ENCODE measurements at regions of chr3 and their contacts with region 1.

Region 1: DNA sequence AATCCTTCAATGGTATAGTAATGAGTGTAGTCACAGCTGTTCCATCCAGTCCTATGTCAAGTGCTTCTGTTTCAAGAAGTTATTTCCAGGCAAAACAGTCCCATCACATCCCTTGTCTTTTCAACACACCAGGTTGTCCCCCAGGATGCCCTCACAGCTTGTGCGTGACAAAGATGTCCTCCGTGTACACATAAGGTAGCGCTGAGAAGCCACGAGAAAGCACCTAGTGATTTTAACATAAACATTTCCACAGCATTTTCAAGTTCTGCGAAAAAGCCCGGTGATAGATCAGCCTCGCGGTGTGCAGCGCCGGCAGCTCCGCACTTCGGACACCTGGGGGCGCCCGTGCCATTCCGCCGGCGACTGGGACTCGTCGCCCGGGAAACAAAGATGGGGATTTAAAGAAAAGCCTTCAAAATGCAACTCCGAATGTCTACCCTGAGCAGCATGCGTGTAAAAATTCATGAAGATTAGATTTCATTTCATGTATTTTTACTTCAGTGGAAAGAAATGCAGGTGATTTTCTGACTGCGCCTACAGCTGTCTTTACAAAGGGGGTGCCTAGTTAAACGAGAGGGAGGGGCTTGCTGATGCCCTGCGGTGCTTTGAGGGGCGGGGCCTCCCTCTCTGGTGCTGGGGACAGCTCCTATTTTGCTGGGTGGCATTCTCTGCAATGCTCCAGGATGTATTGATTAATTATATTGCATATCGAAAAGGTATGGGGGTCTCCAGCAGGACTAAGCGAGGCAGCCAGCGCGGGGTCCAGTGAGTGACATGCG is 49.9 kb downstream of the KY start:
- DNase-seq: peak; percentile 28
- ATAC-seq: peak; percentile 94
- H3K4me3 ChIP-seq: no peak overlapping the region
- H3K27ac ChIP-seq: no peak overlapping the region
- H3K4me1 ChIP-seq: peaks cover 0 to 5% of the 10 kb centered on the region in 2 experiments; a peak in 1 of 4 replicates
- H3K27me3 ChIP-seq: peaks cover 11% of the 10 kb centered on the region; the same call in 1 of the 2 replicates
- CTCF ChIP-seq: peak; percentile 89 to 98 (median 93)
- POLR2A ChIP-seq: no peak
- RAD21 ChIP-seq: peak; percentile 94

Region 2: DNA sequence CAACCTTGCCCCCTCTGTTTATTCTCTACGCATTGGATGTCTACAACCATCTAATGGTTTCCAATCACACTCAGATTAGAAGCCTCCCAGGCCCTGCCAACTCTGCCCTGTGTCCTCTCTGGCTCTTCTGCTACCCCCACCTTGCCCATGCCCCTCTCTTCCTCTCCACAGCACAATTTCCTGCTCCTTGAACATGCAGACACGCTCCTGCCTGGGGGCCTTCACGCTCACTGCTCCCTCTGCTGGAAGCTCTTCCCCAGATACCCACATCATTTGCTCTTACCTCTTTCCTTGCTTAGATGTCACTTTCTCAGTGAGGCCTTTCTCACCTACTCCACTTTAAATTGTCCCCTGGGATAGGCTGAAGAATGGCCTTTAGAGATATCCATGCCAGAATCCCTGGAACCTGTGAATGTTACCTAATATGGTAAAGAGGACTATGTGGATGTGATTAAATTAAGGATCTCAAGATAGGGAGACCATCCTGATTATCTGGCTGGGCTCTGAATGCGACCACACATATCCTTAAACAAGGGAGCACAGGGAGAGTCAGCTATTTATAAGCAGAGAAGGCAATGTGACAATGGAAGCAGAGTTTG is 40.1 kb after region 1 on chr3:
- CTCF ChIA-PET with region 1: interaction called, 3 read pairs
- POLR2A ChIA-PET with region 1: no interaction called
- RAD21 ChIA-PET with region 1: no interaction called
- intact Hi-C with region 1: loop called (anchors 1 kb)
- DNase-seq: peak; percentile 18
- ATAC-seq: peak; percentile 89
- H3K4me3 ChIP-seq: no peak overlapping the region
- H3K27ac ChIP-seq: no peak overlapping the region
- H3K4me1 ChIP-seq: no peaks in the 10 kb centered on the region
- H3K27me3 ChIP-seq: no peaks in the 10 kb centered on the region; the same call in 1 of the 2 replicates
- CTCF ChIP-seq: peak; percentile 41 to 71 (median 61); a peak in 5 of 6 replicates
- POLR2A ChIP-seq: no peak
- RAD21 ChIP-seq: peak; percentile 38

Region 3: GRCh38 chr3:134754768-134755559 is 154.1 kb after region 1 on chr3:
- CTCF ChIA-PET with region 1: interaction called, 29 read pairs
- POLR2A ChIA-PET with region 1: no interaction called
- RAD21 ChIA-PET with region 1: interaction called in 1 of 2 experiments, 6 read pairs
- intact Hi-C with region 1: loop called (anchors 1 kb)
- DNase-seq: peak; percentile 10
- ATAC-seq: peak; percentile 98
- H3K4me3 ChIP-seq: no peak overlapping the region
- H3K27ac ChIP-seq: no peak overlapping the region
- H3K4me1 ChIP-seq: no peaks in the 10 kb centered on the region
- H3K27me3 ChIP-seq: peaks cover 27% of the 10 kb centered on the region; the same call in 1 of the 2 replicates
- CTCF ChIP-seq: peak; percentile 44 to 89 (median 73); a peak in 5 of 6 replicates
- POLR2A ChIP-seq: no peak
- RAD21 ChIP-seq: peak; percentile 48

Region 4: GRCh38 chr3:134846911-134847317 is 246.0 kb after region 1 on chr3:
- CTCF ChIA-PET with region 1: no interaction called
- POLR2A ChIA-PET with region 1: no interaction called
- RAD21 ChIA-PET with region 1: no interaction called
- intact Hi-C with region 1: no loop called
- DNase-seq: peak; percentile 51
- ATAC-seq: peak; percentile 87
- H3K4me3 ChIP-seq: no peak overlapping the region
- H3K27ac ChIP-seq: no peak overlapping the region
- H3K4me1 ChIP-seq: peaks cover 0 to 13% of the 10 kb centered on the region in 2 experiments; a peak in 2 of 4 replicates
- H3K27me3 ChIP-seq: no peaks in the 10 kb centered on the region
- CTCF ChIP-seq: no peak
- POLR2A ChIP-seq: no peak
- RAD21 ChIP-seq: no peak

Region 5: DNA sequence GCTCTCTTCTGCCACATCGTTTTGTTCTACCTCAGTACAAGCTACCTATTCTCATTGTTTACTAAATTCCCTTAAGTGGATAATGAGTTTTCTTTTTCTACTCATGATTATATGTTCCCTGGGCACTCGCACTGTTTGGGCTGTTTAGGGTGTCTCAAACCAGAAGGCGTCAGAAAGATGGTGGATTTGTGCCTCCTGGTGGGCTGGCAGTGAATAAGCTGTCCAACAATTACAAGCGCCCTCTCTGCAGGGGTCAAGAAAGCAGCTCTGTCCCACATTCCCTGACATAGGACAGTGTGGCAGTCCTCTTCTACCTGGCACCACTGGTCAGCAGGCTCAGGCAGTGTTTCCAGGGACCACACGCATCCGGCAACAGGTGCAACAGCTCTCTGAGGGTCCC is 1191.3 kb after region 1 on chr3:
- CTCF ChIA-PET with region 1: no interaction called
- POLR2A ChIA-PET with region 1: no interaction called
- RAD21 ChIA-PET with region 1: no interaction called
- intact Hi-C with region 1: loop called (anchors 5 kb)
- DNase-seq: no peak
- ATAC-seq: peak; percentile 58; the same call in 1 of the 2 replicates
- H3K4me3 ChIP-seq: no peak overlapping the region
- H3K27ac ChIP-seq: no peak overlapping the region
- H3K4me1 ChIP-seq: no peaks in the 10 kb centered on the region
- H3K27me3 ChIP-seq: peaks cover 35% of the 10 kb centered on the region; the same call in 1 of the 2 replicates
- CTCF ChIP-seq: peak in 2 of 3 experiments; percentile 24 to 43; a peak in 3 of 6 replicates
- POLR2A ChIP-seq: no peak
- RAD21 ChIP-seq: peak; percentile 43

Region 6: GRCh38 chr3:136042608-136043221 is 1441.8 kb after region 1 on chr3:
- CTCF ChIA-PET with region 1: no interaction called
- POLR2A ChIA-PET with region 1: no interaction called
- RAD21 ChIA-PET with region 1: no interaction called
- intact Hi-C with region 1: loop called (anchors 5 kb)
- DNase-seq: peak; percentile 37
- ATAC-seq: peak; percentile 67; the same call in 1 of the 2 replicates
- H3K4me3 ChIP-seq: no peak overlapping the region
- H3K27ac ChIP-seq: no peak overlapping the region
- H3K4me1 ChIP-seq: no peaks in the 10 kb centered on the region
- H3K27me3 ChIP-seq: no peaks in the 10 kb centered on the region
- CTCF ChIP-seq: peak; percentile 50 to 65 (median 64); a peak in 5 of 6 replicates
- POLR2A ChIP-seq: no peak
- RAD21 ChIP-seq: peak; percentile 76